Endothelial cell of umbilical vein (primary cell): ENCODE measurements at regions of chr17 and their contacts with region 1.

Region 1: DNA sequence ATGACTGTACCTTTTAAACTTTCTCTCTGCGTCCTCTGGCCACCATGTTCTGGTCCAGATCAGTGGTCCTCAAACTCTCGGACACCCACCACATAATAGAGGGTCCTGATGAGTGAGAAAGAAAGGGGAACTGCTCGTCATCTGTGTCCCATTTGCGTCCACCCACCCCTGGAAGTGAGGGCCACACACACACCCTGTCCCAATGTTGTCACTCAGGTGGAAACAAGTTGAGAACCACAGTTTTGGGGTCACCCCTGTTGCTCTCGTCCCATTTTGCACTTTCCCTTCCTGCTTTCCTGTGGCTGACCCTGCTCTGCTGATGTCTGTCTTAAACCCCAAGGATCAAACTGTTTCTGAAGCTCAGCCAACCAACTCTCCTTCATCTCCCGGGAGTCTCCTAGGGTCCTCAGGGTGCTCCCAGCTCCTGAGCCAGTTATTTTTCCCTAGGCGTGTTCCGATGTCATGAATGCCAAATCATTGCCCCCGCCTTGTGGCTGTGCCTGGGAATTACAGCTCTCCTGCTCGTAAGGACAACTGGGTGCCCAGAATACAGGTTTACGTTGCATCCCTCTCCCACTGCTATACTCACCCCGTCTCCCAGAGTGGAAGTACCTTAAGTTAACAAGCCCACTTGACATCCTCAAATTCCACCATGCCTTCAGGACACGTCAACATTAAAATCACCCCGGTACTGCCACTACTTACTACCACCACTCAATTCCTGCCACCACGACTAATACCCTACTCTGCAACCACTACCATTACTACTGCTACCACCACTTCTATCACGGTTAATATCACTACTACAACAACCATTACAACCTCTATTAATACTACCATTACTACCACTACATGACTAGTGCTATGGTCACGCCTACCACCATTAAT is 26.0 kb upstream of the HNF1B start:
- DNase-seq: peak; percentile 61
- H3K4me3 ChIP-seq: no peak overlapping the region
- H3K27ac ChIP-seq: no peak overlapping the region
- H3K4me1 ChIP-seq: no peaks in the 10 kb centered on the region
- H3K27me3 ChIP-seq: no peaks in the 10 kb centered on the region
- CTCF ChIP-seq: peak; percentile 73 to 80
- POLR2A ChIP-seq: no peak

Region 2: GRCh38 chr17:37609170-37610040 is 161.5 kb before region 1 on chr17 and contains the start of gene SYNRG:
- CTCF ChIA-PET with region 1: interaction called, 16 read pairs
- POLR2A ChIA-PET with region 1: no interaction called
- dilution Hi-C with region 1: no loop called
- intact Hi-C with region 1: no loop called
- DNase-seq: peak; percentile 98
- H3K4me3 ChIP-seq: peak within 1 kb of the TSS; percentile 79 to 97 (median 97)
- H3K27ac ChIP-seq: peak within 1 kb of the TSS; percentile 82
- H3K4me1 ChIP-seq: peaks cover 30% of the 10 kb centered on the region
- H3K27me3 ChIP-seq: no peaks in the 10 kb centered on the region
- CTCF ChIP-seq: peak; percentile 12 to 47
- POLR2A ChIP-seq: peak; percentile 92
- total RNA-seq, gene SYNRG: 42.2 and 43.3 TPM in 2 replicates

Region 3: GRCh38 chr17:37701496-37701898 is 69.4 kb before region 1 on chr17:
- CTCF ChIA-PET with region 1: interaction called, 10 read pairs
- POLR2A ChIA-PET with region 1: no interaction called
- dilution Hi-C with region 1: no loop called
- intact Hi-C with region 1: loop called (anchors 1 kb)
- DNase-seq: peak; percentile 27
- H3K4me3 ChIP-seq: no peak overlapping the region
- H3K27ac ChIP-seq: no peak overlapping the region
- H3K4me1 ChIP-seq: no peaks in the 10 kb centered on the region
- H3K27me3 ChIP-seq: peaks cover 23 to 29% of the 10 kb centered on the region in 2 experiments
- CTCF ChIP-seq: peak; percentile 58 to 68
- POLR2A ChIP-seq: no peak

Region 4: DNA sequence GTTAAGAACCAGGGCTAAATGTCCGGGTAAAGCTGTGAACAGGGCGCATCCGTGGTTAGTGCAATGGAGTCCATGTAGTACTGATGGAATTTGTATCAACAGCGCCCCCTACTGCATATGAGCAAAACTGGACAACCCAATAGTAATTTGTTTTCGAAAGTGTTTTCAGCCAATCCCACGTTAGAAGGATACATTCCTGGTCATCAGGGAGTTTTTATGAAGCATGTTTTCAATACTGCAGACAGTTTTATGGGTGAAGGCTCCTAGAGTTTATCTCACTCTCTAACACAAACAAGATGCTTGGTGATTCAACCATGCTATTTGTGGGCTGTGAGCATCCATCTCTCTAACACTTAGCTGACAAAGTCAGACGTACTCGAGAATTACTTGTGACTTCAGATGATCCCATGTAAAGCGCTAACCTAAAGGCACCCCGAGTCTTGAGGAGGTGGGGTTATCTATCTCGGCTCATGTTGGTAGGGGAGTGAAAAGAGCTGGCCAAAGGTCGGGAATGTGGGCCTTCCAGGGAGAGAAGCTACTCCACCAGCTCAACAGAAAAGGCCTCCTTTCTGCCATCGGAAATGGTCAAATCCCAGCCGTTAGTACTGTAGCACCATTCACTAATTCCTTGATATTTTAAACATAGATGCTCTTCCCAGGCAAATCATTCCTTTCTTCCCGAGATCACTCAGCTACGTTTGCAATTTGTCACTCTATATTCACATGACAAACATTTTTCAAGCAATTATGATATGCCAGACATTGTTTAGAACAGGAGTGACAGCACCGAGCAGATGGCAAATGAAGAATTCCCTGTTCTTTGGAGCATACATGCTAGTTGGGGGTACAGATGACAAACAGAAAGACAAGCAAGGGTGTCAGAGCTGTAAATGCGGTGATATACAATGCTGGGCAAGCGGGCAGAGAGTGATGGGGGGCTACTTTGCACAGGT is 20.8 kb after region 1 on chr17:
- CTCF ChIA-PET with region 1: interaction called, 16 read pairs
- POLR2A ChIA-PET with region 1: no interaction called
- dilution Hi-C with region 1: no loop called
- intact Hi-C with region 1: no loop called
- DNase-seq: peak; percentile 7
- H3K4me3 ChIP-seq: no peak overlapping the region
- H3K27ac ChIP-seq: no peak overlapping the region
- H3K4me1 ChIP-seq: no peaks in the 10 kb centered on the region
- H3K27me3 ChIP-seq: peaks cover 7 to 10% of the 10 kb centered on the region in 2 experiments
- CTCF ChIP-seq: peak; percentile 22 to 25
- POLR2A ChIP-seq: no peak

Region 5: GRCh38 chr17:37844158-37844976 is 73.5 kb after region 1 on chr17:
- CTCF ChIA-PET with region 1: interaction called, 12 read pairs
- POLR2A ChIA-PET with region 1: no interaction called
- dilution Hi-C with region 1: no loop called
- intact Hi-C with region 1: loop called (anchors 2 kb)
- DNase-seq: peak; percentile 64
- H3K4me3 ChIP-seq: no peak overlapping the region
- H3K27ac ChIP-seq: no peak overlapping the region
- H3K4me1 ChIP-seq: peaks cover 4% of the 10 kb centered on the region
- H3K27me3 ChIP-seq: no peaks in the 10 kb centered on the region
- CTCF ChIP-seq: peak; percentile 74 to 95
- POLR2A ChIP-seq: no peak

Region 6: DNA sequence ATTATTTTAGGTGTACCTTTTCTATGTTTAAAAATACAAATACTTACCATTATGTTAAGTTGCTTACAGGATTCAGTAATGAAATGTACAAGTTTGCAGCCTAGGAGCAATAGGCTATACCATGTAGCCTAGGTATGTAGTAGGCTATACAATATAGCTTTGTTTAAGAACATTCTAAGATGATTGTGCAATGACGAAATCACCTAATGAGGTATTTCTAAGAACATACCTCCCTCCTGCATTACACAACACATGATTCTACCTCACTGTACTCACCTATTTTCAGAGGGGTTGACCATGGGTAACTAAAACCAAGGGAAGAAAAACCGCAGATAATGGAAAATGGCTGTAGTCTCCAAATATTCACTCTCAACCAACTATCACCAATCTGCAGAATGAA is 118.0 kb after region 1 on chr17:
- CTCF ChIA-PET with region 1: no interaction called
- POLR2A ChIA-PET with region 1: no interaction called
- dilution Hi-C with region 1: no loop called
- intact Hi-C with region 1: no loop called
- DNase-seq: no peak
- H3K4me3 ChIP-seq: no peak overlapping the region
- H3K27ac ChIP-seq: no peak overlapping the region
- H3K4me1 ChIP-seq: no peaks in the 10 kb centered on the region
- H3K27me3 ChIP-seq: no peaks in the 10 kb centered on the region
- CTCF ChIP-seq: no peak
- POLR2A ChIP-seq: no peak